ENCODE measurements at regions of chrX and their contacts with region 1.

Region 1: GRCh38 chrX:112863850-112864249 is 23.2 kb upstream of the AMOT start:
- H3K4me3 ChIP-seq: no peak overlapping the region
- H3K27ac ChIP-seq: no peak overlapping the region
- H3K4me1 ChIP-seq: peaks cover 8% of the 10 kb centered on the region
- CTCF ChIP-seq: no peak

Region 2: DNA sequence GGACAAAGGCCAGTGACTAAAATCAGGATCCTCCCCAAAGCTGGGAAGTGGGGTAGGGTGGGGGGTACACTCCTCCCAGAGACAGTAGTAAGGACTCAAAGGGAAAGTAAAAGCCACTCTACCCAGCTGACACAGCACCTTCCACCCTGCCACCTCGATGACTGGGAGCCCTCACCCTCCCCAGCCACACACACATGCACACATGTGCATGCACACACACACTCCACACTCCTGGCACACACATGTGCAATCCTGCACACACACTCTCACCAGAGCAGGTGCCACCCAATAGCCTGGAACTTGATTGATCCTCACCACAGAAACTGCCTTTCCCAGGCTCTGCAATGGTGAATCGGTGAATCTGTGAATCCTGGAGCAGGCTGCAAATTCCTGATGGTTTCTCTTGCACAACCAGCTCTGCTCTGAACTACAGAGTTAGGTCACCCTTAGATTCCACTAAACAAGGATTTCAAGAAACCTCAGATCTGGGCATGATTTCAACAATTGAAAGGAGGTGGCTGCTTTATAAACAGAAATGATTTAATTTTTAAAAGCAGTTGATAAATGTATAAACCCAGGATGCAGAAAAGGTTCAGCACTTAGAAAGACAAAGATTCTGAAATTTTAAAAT is 44.7 kb before region 1 on chrX:
- CTCF ChIA-PET with region 1: no interaction called
- POLR2A ChIA-PET with region 1: no interaction called
- H3K4me3 ChIP-seq: no peak overlapping the region
- H3K27ac ChIP-seq: no peak overlapping the region
- H3K4me1 ChIP-seq: no peaks in the 10 kb centered on the region
- CTCF ChIP-seq: no peak

Region 3: GRCh38 chrX:114075073-114075673 is 1211.3 kb after region 1 on chrX:
- CTCF ChIA-PET with region 1: no interaction called
- POLR2A ChIA-PET with region 1: interaction called, 20 read pairs
- H3K4me3 ChIP-seq: no peak overlapping the region
- H3K27ac ChIP-seq: no peak overlapping the region
- H3K4me1 ChIP-seq: no peaks in the 10 kb centered on the region
- CTCF ChIP-seq: no peak

Measured in HEK293 (cell line).